ENCODE measurements at regions of chr1 and their contacts with region 1.

Region 1: GRCh38 chr1:110338886-110339406 is at the start of gene RBM15:
- DNase-seq: peak; percentile 77 to 100 (median 99)
- ATAC-seq: peak; percentile 84
- H3K4me3 ChIP-seq: peak within 1 kb of the TSS; percentile 94
- H3K4me3 Mint-ChIP-seq: no peak within 1 kb of the TSS
- H3K27ac ChIP-seq: peak within 1 kb of the TSS; percentile 96
- H3K27ac Mint-ChIP-seq: peak within 1 kb of the TSS in 1 of 9 donors; percentile 97
- H3K4me1 ChIP-seq: peaks cover 40 to 41% of the 10 kb centered on the region in 2 donors
- H3K4me1 Mint-ChIP-seq: peaks cover 37 to 64% (median 61%) of the 10 kb centered on the region in 7 donors
- H3K27me3 ChIP-seq: no peaks in the 10 kb centered on the region
- H3K27me3 Mint-ChIP-seq: peaks cover 0 to 2% (median 0%) of the 10 kb centered on the region in 5 donors
- total RNA-seq, gene RBM15: 36.4 to 58.6 (median 46.3) TPM

Region 2: DNA sequence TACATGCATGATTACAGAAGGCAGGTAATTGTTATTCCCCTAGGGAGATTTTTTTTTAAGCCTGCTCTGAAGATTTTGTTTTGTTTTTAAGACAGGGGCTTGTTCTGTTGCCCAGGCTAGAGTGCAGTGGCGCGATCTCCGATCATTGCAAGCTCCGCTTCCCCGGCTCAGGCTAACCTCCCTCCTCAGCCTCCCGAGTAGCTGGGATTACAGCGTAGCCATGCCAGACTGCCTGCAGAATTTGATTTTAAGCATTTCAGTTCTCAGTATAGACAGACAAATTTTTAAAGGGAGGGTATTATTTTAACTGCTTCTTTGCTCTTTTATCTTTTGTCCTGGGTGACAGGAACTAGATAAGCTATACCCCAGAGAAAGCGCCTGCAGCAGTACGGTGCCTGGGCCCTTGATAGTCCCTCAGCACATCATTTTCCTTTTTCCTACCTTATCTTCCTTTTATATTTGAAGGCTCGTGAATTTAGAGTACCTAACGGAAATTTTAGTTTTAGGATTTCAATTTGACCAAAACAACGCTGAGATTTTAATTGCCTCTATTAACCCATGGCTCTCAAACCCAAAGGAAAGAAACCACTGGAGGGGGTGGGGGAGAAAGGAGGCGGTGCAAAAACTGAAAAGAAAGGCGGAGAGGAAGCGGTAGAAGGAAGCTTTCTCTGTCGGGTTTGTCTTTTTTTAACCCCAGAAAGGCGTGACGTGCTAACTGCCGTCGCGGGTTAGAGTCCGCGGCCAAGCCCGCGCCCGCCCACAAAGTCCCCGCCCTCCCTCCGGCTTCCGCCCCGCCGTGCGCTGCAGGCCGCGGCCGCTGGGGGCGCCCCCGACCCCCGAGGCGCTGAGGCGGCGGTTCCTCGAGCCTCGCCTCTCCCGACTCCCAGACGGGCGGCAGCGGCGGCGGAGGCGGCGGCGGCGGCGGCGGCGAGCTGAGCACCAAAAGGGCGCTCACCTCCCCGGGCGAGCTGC is 1779.4 kb before region 1 on chr1 and contains the start of gene EEIG2:
- CTCF ChIA-PET with region 1: no interaction called
- POLR2A ChIA-PET with region 1: no interaction called
- intact Hi-C with region 1: loop called in 1 of 2 experiments (anchors 2 kb)
- DNase-seq: peak; percentile 84 to 94 (median 91)
- ATAC-seq: peak; percentile 94
- H3K4me3 ChIP-seq: peak within 1 kb of the TSS; percentile 65
- H3K4me3 Mint-ChIP-seq: peak within 1 kb of the TSS in 9 of 10 donors; percentile 93 to 99 (median 96)
- H3K27ac ChIP-seq: peak within 1 kb of the TSS; percentile 68
- H3K27ac Mint-ChIP-seq: peak within 1 kb of the TSS; percentile 84 to 96 (median 91)
- H3K4me1 ChIP-seq: peaks cover 21 to 31% of the 10 kb centered on the region in 2 donors
- H3K4me1 Mint-ChIP-seq: peaks cover 22 to 38% (median 33%) of the 10 kb centered on the region in 7 donors
- H3K27me3 ChIP-seq: no peaks in the 10 kb centered on the region
- H3K27me3 Mint-ChIP-seq: peaks cover 0 to 10% (median 0%) of the 10 kb centered on the region in 5 donors
- total RNA-seq, gene EEIG2: 7.8 to 15.9 (median 10.9) TPM

Region 3: GRCh38 chr1:109426278-109427170 is 912.4 kb before region 1 on chr1 and contains the start of gene PSMA5:
- CTCF ChIA-PET with region 1: no interaction called
- POLR2A ChIA-PET with region 1: no interaction called
- intact Hi-C with region 1: loop called in 1 of 2 experiments (anchors 2 kb)
- DNase-seq: peak; percentile 73 to 97 (median 95)
- ATAC-seq: peak; percentile 96
- H3K4me3 ChIP-seq: peak within 1 kb of the TSS; percentile 77
- H3K4me3 Mint-ChIP-seq: peak within 1 kb of the TSS; percentile 95 to 99 (median 98)
- H3K27ac ChIP-seq: peak within 1 kb of the TSS; percentile 91
- H3K27ac Mint-ChIP-seq: peak within 1 kb of the TSS; percentile 80 to 99 (median 98)
- H3K4me1 ChIP-seq: peaks cover 27 to 29% of the 10 kb centered on the region in 2 donors
- H3K4me1 Mint-ChIP-seq: peaks cover 29 to 46% (median 34%) of the 10 kb centered on the region in 7 donors
- H3K27me3 ChIP-seq: no peaks in the 10 kb centered on the region
- H3K27me3 Mint-ChIP-seq: no peaks in the 10 kb centered on the region
- total RNA-seq, gene PSMA5: 38.3 to 203 (median 70.7) TPM

Region 4: DNA sequence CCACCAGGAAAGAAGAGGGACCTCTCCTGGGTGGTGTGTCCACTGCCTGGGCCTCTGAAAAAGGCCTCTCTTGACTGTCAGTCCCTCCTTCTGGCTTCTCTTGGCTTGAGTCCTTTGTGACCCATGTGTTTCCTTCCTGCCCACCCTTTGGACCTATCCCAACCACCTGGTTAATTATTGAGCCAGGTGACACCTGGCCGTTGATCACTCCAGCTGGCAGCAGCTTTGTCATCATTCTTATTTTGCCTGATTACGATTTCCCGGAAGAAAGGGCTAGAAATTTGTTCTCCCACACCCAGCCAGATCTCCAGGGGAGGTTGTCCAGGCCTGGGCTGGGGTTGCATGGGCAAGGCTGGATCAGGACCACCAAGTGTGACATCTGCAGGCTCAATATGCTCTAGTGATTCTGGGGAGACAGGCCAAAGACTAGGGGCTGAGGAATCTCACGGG is 403.5 kb before region 1 on chr1:
- CTCF ChIA-PET with region 1: no interaction called
- POLR2A ChIA-PET with region 1: no interaction called
- intact Hi-C with region 1: no loop called
- DNase-seq: no peak
- ATAC-seq: no peak
- H3K4me3 ChIP-seq: no peak overlapping the region
- H3K4me3 Mint-ChIP-seq: no peak overlapping the region
- H3K27ac ChIP-seq: no peak overlapping the region
- H3K27ac Mint-ChIP-seq: peak overlapping the region in 1 of 9 donors; percentile 46
- H3K4me1 ChIP-seq: no peaks in the 10 kb centered on the region
- H3K4me1 Mint-ChIP-seq: peaks cover 0 to 10% (median 0%) of the 10 kb centered on the region in 7 donors
- H3K27me3 ChIP-seq: no peaks in the 10 kb centered on the region
- H3K27me3 Mint-ChIP-seq: peaks cover 0 to 22% (median 0%) of the 10 kb centered on the region in 5 donors

Region 5: GRCh38 chr1:109984456-109985275 is 354.3 kb before region 1 on chr1 and contains the start of gene AHCYL1:
- CTCF ChIA-PET with region 1: no interaction called
- POLR2A ChIA-PET with region 1: interaction called, 3 read pairs
- intact Hi-C with region 1: loop called in 1 of 2 experiments (anchors 1 kb)
- DNase-seq: peak; percentile 97 to 99 (median 99)
- ATAC-seq: peak; percentile 99
- H3K4me3 ChIP-seq: peak within 1 kb of the TSS; percentile 72
- H3K4me3 Mint-ChIP-seq: peak within 1 kb of the TSS; percentile 87 to 100 (median 97)
- H3K27ac ChIP-seq: peak within 1 kb of the TSS; percentile 92
- H3K27ac Mint-ChIP-seq: peak within 1 kb of the TSS; percentile 94 to 99 (median 98)
- H3K4me1 ChIP-seq: peaks cover 22 to 24% of the 10 kb centered on the region in 2 donors
- H3K4me1 Mint-ChIP-seq: peaks cover 22 to 49% (median 42%) of the 10 kb centered on the region in 7 donors
- H3K27me3 ChIP-seq: no peaks in the 10 kb centered on the region
- H3K27me3 Mint-ChIP-seq: peaks cover 0 to 6% (median 0%) of the 10 kb centered on the region in 5 donors
- total RNA-seq, gene AHCYL1: 16.6 to 60.1 (median 37.1) TPM

Region 6: GRCh38 chr1:110224240-110224995 is 114.5 kb before region 1 on chr1:
- CTCF ChIA-PET with region 1: no interaction called
- POLR2A ChIA-PET with region 1: no interaction called
- intact Hi-C with region 1: no loop called
- DNase-seq: no peak
- ATAC-seq: no peak
- H3K4me3 ChIP-seq: no peak overlapping the region
- H3K4me3 Mint-ChIP-seq: no peak overlapping the region
- H3K27ac ChIP-seq: no peak overlapping the region
- H3K27ac Mint-ChIP-seq: no peak overlapping the region
- H3K4me1 ChIP-seq: no peaks in the 10 kb centered on the region
- H3K4me1 Mint-ChIP-seq: peaks cover 0 to 4% (median 0%) of the 10 kb centered on the region in 7 donors
- H3K27me3 ChIP-seq: no peaks in the 10 kb centered on the region
- H3K27me3 Mint-ChIP-seq: no peaks in the 10 kb centered on the region

Region 7: DNA sequence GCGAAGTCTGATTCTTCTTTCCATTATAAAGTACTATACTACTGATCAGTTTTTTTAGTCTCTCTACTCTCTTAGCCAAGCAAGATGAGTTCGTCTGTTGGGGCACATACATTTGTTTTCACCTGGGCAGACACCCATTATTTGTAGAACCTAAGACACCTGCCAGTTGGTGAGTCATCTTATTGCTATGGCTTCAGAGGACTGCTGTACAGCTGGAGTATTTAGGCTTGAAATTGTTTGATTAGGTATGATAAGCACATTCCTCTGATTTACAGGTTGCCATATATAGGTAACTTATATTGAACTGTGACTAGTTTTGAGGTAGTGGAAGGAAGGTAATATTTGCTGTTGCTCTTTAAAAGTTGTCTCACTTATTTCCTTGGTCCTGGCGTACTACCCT is 17.5 kb after region 1 on chr1:
- CTCF ChIA-PET with region 1: no interaction called
- POLR2A ChIA-PET with region 1: interaction called, 13 read pairs
- intact Hi-C with region 1: loop called in 1 of 2 experiments (anchors 2 kb)
- DNase-seq: no peak
- ATAC-seq: no peak
- H3K4me3 ChIP-seq: no peak overlapping the region
- H3K4me3 Mint-ChIP-seq: no peak overlapping the region
- H3K27ac ChIP-seq: no peak overlapping the region
- H3K27ac Mint-ChIP-seq: peak overlapping the region in 1 of 9 donors; percentile 65
- H3K4me1 ChIP-seq: no peaks in the 10 kb centered on the region
- H3K4me1 Mint-ChIP-seq: peaks cover 11 to 44% (median 38%) of the 10 kb centered on the region in 7 donors
- H3K27me3 ChIP-seq: no peaks in the 10 kb centered on the region
- H3K27me3 Mint-ChIP-seq: no peaks in the 10 kb centered on the region

Region 8: GRCh38 chr1:110425612-110426152 is 86.7 kb after region 1 on chr1:
- CTCF ChIA-PET with region 1: no interaction called
- POLR2A ChIA-PET with region 1: no interaction called
- intact Hi-C with region 1: no loop called
- DNase-seq: no peak
- ATAC-seq: no peak
- H3K4me3 ChIP-seq: no peak overlapping the region
- H3K4me3 Mint-ChIP-seq: no peak overlapping the region
- H3K27ac ChIP-seq: no peak overlapping the region
- H3K27ac Mint-ChIP-seq: peak overlapping the region in 1 of 9 donors; percentile 17
- H3K4me1 ChIP-seq: no peaks in the 10 kb centered on the region
- H3K4me1 Mint-ChIP-seq: peaks cover 0 to 13% (median 0%) of the 10 kb centered on the region in 7 donors
- H3K27me3 ChIP-seq: no peaks in the 10 kb centered on the region
- H3K27me3 Mint-ChIP-seq: peaks cover 1 to 19% (median 12%) of the 10 kb centered on the region in 5 donors

Region 9: DNA sequence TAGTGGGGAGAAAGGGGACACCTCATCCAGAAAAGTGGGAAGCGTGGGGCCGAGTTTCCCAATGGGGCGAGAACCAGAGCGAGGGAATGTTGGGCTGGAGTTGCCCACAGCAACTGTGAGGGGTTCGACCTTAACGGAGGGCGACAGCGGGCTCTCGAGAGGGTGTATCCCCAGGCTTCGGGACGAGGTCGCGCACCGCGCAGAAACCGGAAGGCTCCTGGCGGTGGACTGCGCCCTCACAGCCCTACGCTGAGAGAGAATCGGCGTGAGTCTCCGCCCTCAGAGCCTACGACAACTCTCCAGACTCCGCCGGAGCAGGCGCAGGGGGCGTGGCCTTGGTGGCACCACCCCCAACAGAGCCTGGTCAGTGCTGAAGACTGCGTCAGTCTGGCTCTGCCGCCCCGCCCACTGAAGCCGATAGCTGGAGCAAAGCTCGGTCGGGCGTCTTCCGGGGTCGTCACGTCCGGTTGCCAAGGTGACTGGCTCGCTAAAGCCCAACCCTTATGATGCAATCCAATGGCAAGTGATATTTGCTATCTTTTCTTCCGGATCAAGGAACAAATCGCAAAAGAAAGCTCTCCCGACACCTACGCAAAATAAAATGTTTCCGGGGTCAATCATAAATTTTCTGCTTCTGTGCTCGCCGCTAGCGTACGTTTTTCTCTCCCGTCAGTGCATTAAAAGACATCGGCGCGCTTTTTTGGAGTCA is 624.9 kb after region 1 on chr1 and contains the start of gene LRIF1:
- CTCF ChIA-PET with region 1: no interaction called
- POLR2A ChIA-PET with region 1: interaction called, 6 read pairs
- intact Hi-C with region 1: loop called in 1 of 2 experiments (anchors 5 kb)
- DNase-seq: peak; percentile 96 to 100 (median 100)
- ATAC-seq: peak; percentile 98
- H3K4me3 ChIP-seq: peak within 1 kb of the TSS; percentile 90
- H3K4me3 Mint-ChIP-seq: peak within 1 kb of the TSS; percentile 81 to 98 (median 93)
- H3K27ac ChIP-seq: peak within 1 kb of the TSS; percentile 89
- H3K27ac Mint-ChIP-seq: peak within 1 kb of the TSS; percentile 89 to 99 (median 97)
- H3K4me1 ChIP-seq: peaks cover 25% of the 10 kb centered on the region in 2 donors
- H3K4me1 Mint-ChIP-seq: peaks cover 29 to 50% (median 35%) of the 10 kb centered on the region in 7 donors
- H3K27me3 ChIP-seq: peaks cover 0 to under 1% of the 10 kb centered on the region in 2 donors
- H3K27me3 Mint-ChIP-seq: peaks cover 12 to 19% (median 15%) of the 10 kb centered on the region in 5 donors
- total RNA-seq, gene LRIF1: 7.9 to 25.8 (median 17.3) TPM

Region 10: GRCh38 chr1:111619635-111620440 is 1280.9 kb after region 1 on chr1 and contains the start of gene RAP1A:
- CTCF ChIA-PET with region 1: no interaction called
- POLR2A ChIA-PET with region 1: no interaction called
- intact Hi-C with region 1: loop called in 1 of 2 experiments (anchors 5 kb)
- DNase-seq: peak; percentile 80 to 95 (median 90)
- ATAC-seq: peak; percentile 93
- H3K4me3 ChIP-seq: peak within 1 kb of the TSS; percentile 88
- H3K4me3 Mint-ChIP-seq: peak within 1 kb of the TSS; percentile 93 to 99 (median 96)
- H3K27ac ChIP-seq: peak within 1 kb of the TSS; percentile 91
- H3K27ac Mint-ChIP-seq: peak within 1 kb of the TSS; percentile 86 to 98 (median 95)
- H3K4me1 ChIP-seq: peaks cover 46 to 64% of the 10 kb centered on the region in 2 donors
- H3K4me1 Mint-ChIP-seq: peaks cover 57 to 82% (median 76%) of the 10 kb centered on the region in 7 donors
- H3K27me3 ChIP-seq: no peaks in the 10 kb centered on the region
- H3K27me3 Mint-ChIP-seq: no peaks in the 10 kb centered on the region
- total RNA-seq, gene RAP1A: 89.8 to 183 (median 107) TPM

Measured in naive thymus-derived CD4-positive, alpha-beta T cell (primary cell).